ENCODE measurements at regions of chr3 and their contacts with region 1.

Region 1: GRCh38 chr3:158790901-158791589 is 10.8 kb upstream of the MFSD1 start:
- DNase-seq: peak in 3 of 5 donors; percentile 45 to 51 (median 50)
- H3K4me3 ChIP-seq: no peak overlapping the region
- H3K4me3 Mint-ChIP-seq: peak overlapping the region in 5 of 7 donors; percentile 51 to 75 (median 64)
- H3K27ac ChIP-seq: no peak overlapping the region
- H3K27ac Mint-ChIP-seq: peak overlapping the region in 1 of 8 donors; percentile 14
- H3K4me1 ChIP-seq: no peaks in the 10 kb centered on the region
- H3K4me1 Mint-ChIP-seq: peaks cover 3 to 5% (median 5%) of the 10 kb centered on the region in 3 donors
- H3K27me3 ChIP-seq: no peaks in the 10 kb centered on the region
- H3K27me3 Mint-ChIP-seq: no peaks in the 10 kb centered on the region

Region 2: GRCh38 chr3:158659454-158660237 is 131.4 kb before region 1 on chr3:
- CTCF ChIA-PET with region 1: interaction called, 15 read pairs
- POLR2A ChIA-PET with region 1: no interaction called
- DNase-seq: peak in 4 of 5 donors; percentile 15 to 54 (median 24)
- H3K4me3 ChIP-seq: no peak overlapping the region
- H3K4me3 Mint-ChIP-seq: no peak overlapping the region
- H3K27ac ChIP-seq: no peak overlapping the region
- H3K27ac Mint-ChIP-seq: peak overlapping the region in 5 of 8 donors; percentile 10 to 50 (median 42)
- H3K4me1 ChIP-seq: no peaks in the 10 kb centered on the region
- H3K4me1 Mint-ChIP-seq: peaks cover 2 to 23% (median 21%) of the 10 kb centered on the region in 3 donors
- H3K27me3 ChIP-seq: no peaks in the 10 kb centered on the region
- H3K27me3 Mint-ChIP-seq: no peaks in the 10 kb centered on the region

Region 3: DNA sequence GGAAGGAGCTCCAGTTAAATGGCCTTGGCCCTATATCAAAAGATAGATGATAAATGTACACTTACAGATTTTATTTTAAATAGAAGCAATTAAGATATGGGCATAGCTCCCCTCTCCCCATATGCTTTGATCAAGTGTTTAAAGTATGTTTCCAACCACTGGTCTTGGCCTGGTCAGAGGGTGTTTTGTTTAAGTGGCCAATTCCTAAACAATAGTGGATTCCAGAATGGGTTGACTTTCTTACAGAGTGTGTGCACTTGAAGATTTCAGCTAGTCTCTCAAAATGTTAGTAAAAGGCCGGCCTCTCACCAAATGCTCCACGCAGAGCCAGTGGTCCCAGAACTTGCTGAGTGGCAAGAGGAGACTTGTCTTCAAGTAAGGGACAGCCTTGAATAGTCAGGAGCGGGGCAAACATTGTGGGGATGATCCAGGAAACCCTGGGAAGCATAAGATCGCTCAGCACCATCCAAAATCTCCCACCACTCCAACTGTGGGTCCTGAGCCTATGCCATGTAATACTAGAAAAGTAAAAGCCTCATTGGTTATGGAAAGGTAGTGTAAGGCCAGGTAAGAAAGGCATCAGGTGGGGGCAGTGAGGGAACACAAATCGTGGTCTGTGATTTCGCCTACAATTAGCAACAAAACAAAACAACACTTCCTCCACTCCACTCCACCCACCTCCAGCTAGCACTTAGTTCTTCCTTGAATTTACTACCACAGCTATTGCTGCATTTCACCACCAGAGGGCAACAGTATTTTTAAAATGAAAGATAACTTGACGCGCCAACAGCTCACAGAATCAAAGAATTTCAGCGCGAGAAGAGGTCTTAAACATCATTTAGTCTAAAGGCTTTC is 63.6 kb before region 1 on chr3:
- CTCF ChIA-PET with region 1: interaction called, 24 read pairs
- POLR2A ChIA-PET with region 1: no interaction called
- DNase-seq: peak in 4 of 5 donors; percentile 7 to 52 (median 36)
- H3K4me3 ChIP-seq: no peak overlapping the region
- H3K4me3 Mint-ChIP-seq: peak overlapping the region; percentile 1 to 73 (median 42)
- H3K27ac ChIP-seq: no peak overlapping the region
- H3K27ac Mint-ChIP-seq: peak overlapping the region in 6 of 8 donors; percentile 1 to 79 (median 59)
- H3K4me1 ChIP-seq: peaks cover 14% of the 10 kb centered on the region
- H3K4me1 Mint-ChIP-seq: peaks cover 21 to 34% (median 31%) of the 10 kb centered on the region in 3 donors
- H3K27me3 ChIP-seq: no peaks in the 10 kb centered on the region
- H3K27me3 Mint-ChIP-seq: peaks cover 3 to 5% of the 10 kb centered on the region in 2 donors

Region 4: GRCh38 chr3:158801696-158802408 is 10.8 kb after region 1 on chr3 and contains the start of gene MFSD1:
- CTCF ChIA-PET with region 1: interaction called, 15 read pairs
- POLR2A ChIA-PET with region 1: interaction called, 7 read pairs
- DNase-seq: peak; percentile 85 to 93 (median 87)
- H3K4me3 ChIP-seq: peak within 1 kb of the TSS; percentile 95
- H3K4me3 Mint-ChIP-seq: peak within 1 kb of the TSS; percentile 80 to 95 (median 90)
- H3K27ac ChIP-seq: peak within 1 kb of the TSS; percentile 71
- H3K27ac Mint-ChIP-seq: peak within 1 kb of the TSS; percentile 71 to 97 (median 92)
- H3K4me1 ChIP-seq: peaks cover 33% of the 10 kb centered on the region
- H3K4me1 Mint-ChIP-seq: peaks cover 26 to 54% (median 46%) of the 10 kb centered on the region in 3 donors
- H3K27me3 ChIP-seq: no peaks in the 10 kb centered on the region
- H3K27me3 Mint-ChIP-seq: no peaks in the 10 kb centered on the region
- total RNA-seq, gene MFSD1: 25.3 to 26.4 TPM

Measured in CD8-positive, alpha-beta memory T cell (primary cell).